Activated CD4-positive, alpha-beta T cell treated with anti-CD3 and anti-CD28 coated beads for 36 hours (primary cell): ENCODE measurements at regions of chr6 and their contacts with region 1.

Region 1: DNA sequence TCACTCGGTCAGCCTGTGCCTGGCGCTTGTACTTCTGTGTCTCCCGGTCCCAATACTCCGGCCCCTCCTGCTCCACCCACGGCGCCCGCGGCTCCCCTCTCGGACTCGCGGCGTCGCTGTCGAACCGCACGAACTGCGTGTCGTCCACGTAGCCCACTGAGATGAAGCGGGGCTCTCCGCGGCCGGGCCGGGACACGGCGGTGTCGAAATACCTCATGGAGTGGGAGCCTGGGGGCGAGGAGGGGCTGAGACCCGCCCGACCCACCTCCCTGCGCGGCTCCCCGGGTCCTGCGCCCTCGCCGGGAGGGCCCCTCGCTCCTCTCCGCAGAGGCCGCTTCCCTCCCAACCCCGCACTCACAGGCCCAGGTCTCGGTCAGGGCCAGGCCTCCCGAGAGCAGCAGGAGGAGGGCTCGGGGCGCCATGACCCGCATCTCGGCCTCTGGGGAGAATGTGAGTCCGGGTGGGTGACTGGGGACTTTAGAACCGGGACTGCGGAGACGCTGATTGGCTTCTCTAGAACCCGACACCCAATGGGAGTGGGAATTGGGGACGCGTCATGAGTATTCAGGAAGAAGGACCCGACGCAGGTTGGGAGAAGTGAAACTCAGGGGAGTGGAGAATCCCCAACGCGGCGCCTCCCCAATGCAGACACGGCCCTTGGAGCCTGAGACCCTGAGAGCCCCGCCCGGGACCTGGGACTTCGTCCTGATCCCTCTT is at the start of gene HLA-C:
- DNase-seq: peak; percentile 92
- ATAC-seq: peak; percentile 89
- H3K4me3 Mint-ChIP-seq: peak within 1 kb of the TSS; percentile 95
- H3K27ac Mint-ChIP-seq: peak within 1 kb of the TSS; percentile 99
- H3K4me1 Mint-ChIP-seq: peaks cover 55% of the 10 kb centered on the region
- H3K27me3 Mint-ChIP-seq: no peaks in the 10 kb centered on the region
- total RNA-seq, gene HLA-C: 660 to 678 TPM

Region 2: DNA sequence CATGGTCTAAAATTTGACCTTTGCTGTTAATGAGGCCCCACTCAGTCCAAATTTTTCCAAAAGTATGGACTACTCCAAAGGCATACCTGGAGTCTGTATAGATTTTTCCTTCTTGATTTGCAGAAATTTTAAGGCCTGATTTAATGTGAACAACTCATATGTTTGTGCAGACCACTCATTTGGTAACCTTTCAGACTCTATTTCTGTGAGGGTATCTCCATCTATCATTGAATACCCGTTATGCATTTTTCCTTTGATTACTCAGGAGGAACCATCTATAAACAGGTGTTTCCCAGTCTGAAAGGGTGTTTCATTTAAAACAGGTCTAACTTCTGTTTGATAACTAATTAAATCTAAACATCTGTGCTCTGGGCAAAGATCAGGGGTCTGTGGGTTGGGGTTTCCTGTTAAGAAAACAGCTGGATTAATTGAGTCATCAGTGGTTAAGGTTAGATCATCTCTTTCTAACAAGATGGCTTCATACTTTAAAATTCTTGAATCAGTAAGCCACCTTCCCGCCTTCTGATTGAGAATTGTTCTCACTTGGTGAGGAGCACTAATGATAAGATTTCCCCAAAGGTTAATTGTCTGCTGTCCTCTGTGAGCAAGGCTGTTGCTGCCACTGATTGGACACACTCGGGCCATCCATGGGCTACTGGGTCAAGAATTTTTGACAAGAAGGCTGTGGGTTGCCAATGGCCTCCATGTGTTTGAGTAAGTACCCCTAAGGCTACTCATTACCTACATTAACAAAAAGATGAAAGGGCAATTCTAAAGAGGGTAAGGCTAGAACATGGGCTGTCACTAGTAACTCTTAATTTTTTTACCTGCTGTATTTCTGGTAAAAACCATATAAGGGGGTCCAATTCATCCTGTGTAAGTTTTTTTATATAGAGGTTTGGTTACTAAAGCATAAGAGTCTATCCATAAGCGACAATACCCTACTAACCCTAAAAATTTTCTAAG is 61.1 kb after region 1 on chr6:
- CTCF ChIA-PET with region 1: no interaction called
- POLR2A ChIA-PET with region 1: no interaction called
- intact Hi-C with region 1: loop called in 1 of 2 experiments (anchors 1 kb)
- DNase-seq: peak; percentile 64
- ATAC-seq: peak; percentile 91
- H3K4me3 Mint-ChIP-seq: peak overlapping the region; percentile 48
- H3K27ac Mint-ChIP-seq: peak overlapping the region; percentile 73
- H3K4me1 Mint-ChIP-seq: peaks cover 19% of the 10 kb centered on the region
- H3K27me3 Mint-ChIP-seq: no peaks in the 10 kb centered on the region

Region 3: DNA sequence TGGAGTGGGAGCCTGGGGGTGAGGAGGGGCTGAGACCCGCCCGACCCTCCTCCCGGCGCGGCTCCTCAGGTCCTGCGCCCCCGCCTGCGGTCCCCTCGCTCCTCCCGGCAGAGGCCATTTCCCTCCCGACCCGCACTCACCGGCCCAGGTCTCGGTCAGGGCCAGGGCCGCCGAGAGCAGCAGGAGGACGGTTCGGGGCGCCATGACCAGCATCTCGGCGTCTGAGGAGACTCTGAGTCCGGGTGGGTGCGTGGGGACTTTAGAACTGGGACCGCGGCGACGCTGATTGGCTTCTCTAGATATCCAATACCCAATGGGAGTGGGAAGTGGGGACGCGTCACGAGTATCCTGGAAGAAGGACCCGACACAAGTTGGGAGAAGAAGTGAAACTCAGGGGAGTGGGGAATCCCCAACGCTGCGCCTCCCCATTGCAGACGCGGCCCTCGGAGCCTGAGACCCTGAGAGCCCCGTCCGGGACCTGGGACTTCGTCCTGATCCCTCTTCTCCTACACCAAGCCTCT is 85.2 kb after region 1 on chr6 and contains the start of gene HLA-B:
- CTCF ChIA-PET with region 1: no interaction called
- POLR2A ChIA-PET with region 1: interaction called, 12 read pairs
- intact Hi-C with region 1: loop called (anchors 1 to 2 kb)
- DNase-seq: peak; percentile 91
- ATAC-seq: peak; percentile 80
- H3K4me3 Mint-ChIP-seq: peak within 1 kb of the TSS; percentile 98
- H3K27ac Mint-ChIP-seq: peak within 1 kb of the TSS; percentile 99
- H3K4me1 Mint-ChIP-seq: peaks cover 56% of the 10 kb centered on the region
- H3K27me3 Mint-ChIP-seq: peaks cover 5% of the 10 kb centered on the region
- total RNA-seq, gene HLA-B: 2,101 to 2,412 TPM